Activated naive CD4-positive, alpha-beta T cell treated with anti-CD3 and anti-CD28 coated beads, Interleukin-2, amount 10 ng/mL, durations not matched to agents 7 days and 5 days (primary cell): ENCODE measurements at regions of chr19 and their contacts with region 1.

Region 1: DNA sequence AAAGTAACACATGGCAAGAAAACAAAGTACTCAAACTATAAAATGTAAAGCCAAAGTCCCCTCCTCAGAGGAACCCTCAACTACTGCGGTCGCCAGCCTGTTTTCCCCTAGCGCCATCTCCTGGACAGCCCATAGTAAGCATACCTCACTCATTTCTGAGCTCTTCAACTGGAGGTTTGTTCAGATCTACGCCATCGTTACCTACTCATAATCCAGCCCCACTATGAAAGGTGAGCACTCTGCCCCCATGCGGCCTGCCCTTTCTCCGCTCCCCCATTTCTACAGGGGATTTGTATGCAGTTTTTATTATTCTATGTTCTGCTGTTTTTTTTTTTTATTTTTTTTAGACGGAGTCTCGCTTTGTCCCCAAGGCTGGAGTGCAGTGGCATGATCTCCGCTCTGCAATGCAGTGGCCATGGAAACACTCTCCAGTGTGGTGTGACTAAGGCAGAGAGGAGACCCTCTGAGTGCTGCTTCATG is 26.2 kb downstream of the OPA3 start:
- DNase-seq: peak; percentile 82
- H3K4me3 Mint-ChIP-seq: no peak overlapping the region
- H3K27ac Mint-ChIP-seq: no peak overlapping the region
- H3K4me1 Mint-ChIP-seq: peaks cover 23% of the 10 kb centered on the region
- H3K27me3 Mint-ChIP-seq: no peaks in the 10 kb centered on the region

Region 2: DNA sequence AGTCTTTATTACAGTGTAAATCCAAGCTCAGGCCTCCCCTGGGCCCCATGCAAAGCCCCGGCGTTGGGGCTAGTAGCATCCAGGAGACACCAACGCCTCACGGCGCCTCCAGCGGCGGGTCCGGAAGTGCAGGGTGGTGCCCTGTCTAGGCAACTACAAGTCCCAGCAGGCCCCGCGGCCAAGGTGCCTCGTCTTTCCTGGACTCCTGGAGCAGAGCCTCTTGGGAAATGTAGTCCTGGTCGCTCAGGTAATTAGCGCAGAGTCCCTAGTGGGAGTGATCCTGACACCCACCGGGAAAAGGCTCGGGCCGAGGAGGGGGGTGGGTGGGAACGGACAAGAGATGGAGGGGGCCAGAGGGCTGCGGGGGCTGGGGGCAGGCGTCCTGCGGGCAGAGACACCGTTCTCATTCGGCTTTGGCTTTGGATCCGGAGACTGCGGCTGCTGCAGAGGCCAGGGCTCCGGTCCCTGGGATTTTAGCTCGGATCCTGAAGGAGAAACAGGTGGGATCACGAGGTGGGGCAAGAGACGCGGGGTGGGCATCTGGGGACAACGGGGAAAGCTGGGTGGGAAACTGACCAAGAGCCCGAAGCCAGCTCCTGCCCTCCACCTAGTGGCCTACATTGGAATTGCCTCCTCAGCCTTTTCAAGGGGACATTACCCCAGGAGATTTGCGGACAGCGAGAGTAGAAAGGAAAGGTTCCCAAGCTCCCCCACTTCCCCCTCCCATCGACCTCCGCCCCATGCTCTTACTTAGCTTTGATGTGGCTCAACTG is 72.9 kb before region 1 on chr19:
- CTCF ChIA-PET with region 1: interaction called, 15 read pairs
- DNase-seq: peak; percentile 99
- H3K4me3 Mint-ChIP-seq: peak overlapping the region; percentile 89
- H3K27ac Mint-ChIP-seq: peak overlapping the region; percentile 83
- H3K4me1 Mint-ChIP-seq: peaks cover 16% of the 10 kb centered on the region
- H3K27me3 Mint-ChIP-seq: peaks cover 31% of the 10 kb centered on the region

Region 3: DNA sequence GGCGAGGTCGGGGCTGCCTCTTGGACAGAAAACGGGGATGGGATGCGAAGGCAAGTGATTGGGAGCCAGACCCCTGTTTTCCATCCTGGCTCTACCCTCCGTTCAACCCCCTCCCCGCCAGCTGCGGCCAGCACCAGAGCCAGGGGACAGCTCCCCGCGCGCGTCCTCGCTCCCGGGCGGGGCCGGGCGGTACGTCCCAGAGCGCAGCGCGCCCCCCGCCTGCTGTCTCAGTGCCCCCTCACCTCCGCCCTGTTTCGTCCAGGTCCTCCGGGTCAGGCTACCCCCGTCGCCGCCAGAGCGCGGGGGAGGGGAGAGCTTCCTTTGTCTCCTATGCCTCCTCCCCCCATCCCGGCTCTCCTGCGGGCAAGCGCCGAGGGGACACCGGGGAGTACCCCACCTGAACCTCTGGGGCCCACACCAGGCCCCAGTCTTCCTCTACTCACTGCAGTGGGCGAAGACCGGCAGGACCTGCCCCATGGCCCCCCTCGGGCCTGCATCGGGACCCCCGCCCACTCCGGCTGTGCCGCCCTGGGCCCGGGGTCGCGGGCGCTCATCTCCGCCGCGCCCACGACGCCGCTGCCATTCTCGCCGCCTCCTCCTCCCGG is 62.0 kb before region 1 on chr19:
- CTCF ChIA-PET with region 1: interaction called, 12 read pairs
- DNase-seq: peak; percentile 71
- H3K4me3 Mint-ChIP-seq: peak overlapping the region; percentile 67
- H3K27ac Mint-ChIP-seq: no peak overlapping the region
- H3K4me1 Mint-ChIP-seq: peaks cover 40% of the 10 kb centered on the region
- H3K27me3 Mint-ChIP-seq: peaks cover 89% of the 10 kb centered on the region

Region 4: DNA sequence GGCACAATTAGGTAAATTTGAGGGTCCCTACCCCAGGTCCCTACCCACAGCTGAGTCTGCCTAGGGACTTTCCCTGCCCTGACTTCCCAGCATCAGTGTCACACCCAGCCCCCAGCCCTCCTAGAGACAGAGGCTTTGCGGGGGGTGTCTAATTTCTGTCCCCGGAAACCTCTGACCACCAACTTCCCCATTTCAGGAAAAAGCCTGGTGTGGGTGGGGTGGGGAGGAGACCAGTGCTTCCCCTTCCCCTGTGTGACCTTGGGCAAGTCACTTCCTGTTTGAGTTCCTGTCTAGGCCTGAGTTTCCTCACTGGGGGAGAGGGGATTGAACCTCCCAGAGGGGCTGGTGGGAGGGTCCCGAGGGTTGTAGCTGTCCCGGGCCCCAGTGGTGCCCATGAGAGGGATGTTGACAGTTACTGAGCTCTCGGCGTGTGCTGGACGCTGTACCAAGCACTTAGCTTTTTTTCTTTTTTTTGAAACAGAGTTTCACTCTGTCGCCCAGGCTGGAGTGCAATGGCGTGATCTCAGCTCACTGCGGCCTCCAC is 43.3 kb before region 1 on chr19:
- CTCF ChIA-PET with region 1: interaction called, 12 read pairs
- DNase-seq: peak; percentile 37
- H3K4me3 Mint-ChIP-seq: peak overlapping the region; percentile 35
- H3K27ac Mint-ChIP-seq: peak overlapping the region; percentile 83
- H3K4me1 Mint-ChIP-seq: peaks cover 69% of the 10 kb centered on the region
- H3K27me3 Mint-ChIP-seq: no peaks in the 10 kb centered on the region

Region 5: DNA sequence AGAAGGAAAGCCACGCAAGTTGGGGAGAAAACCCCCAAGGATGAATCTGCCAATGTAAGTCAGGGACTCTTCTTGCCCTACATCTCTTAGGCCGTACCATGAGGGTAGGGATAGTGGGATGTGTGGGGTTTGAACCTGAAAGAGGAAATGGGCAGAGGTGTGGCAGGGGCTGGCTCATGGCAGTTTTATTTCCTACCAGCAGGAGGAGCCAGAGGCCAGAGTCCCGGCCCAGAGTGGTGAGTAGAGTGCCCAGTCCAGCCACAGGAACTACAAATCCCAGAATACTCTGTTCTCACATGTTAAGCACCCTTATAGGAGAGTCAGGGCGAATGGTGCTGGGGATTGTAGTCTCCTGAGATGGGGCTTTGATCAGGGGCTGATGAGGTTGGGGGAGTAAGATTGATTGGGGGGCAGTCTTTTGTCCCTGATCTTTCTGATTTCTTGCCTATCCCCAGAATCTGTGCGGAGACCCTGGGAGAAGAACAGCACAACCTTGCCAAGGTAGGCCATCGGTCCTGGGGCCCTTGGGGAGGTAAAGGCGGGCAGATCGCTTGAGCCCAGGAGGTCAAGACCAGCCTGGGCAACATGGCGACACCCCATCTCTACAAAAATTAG is 34.7 kb before region 1 on chr19:
- CTCF ChIA-PET with region 1: interaction called, 14 read pairs
- DNase-seq: peak; percentile 81
- H3K4me3 Mint-ChIP-seq: no peak overlapping the region
- H3K27ac Mint-ChIP-seq: peak overlapping the region; percentile 64
- H3K4me1 Mint-ChIP-seq: peaks cover 22% of the 10 kb centered on the region
- H3K27me3 Mint-ChIP-seq: peaks cover 7% of the 10 kb centered on the region

Region 6: DNA sequence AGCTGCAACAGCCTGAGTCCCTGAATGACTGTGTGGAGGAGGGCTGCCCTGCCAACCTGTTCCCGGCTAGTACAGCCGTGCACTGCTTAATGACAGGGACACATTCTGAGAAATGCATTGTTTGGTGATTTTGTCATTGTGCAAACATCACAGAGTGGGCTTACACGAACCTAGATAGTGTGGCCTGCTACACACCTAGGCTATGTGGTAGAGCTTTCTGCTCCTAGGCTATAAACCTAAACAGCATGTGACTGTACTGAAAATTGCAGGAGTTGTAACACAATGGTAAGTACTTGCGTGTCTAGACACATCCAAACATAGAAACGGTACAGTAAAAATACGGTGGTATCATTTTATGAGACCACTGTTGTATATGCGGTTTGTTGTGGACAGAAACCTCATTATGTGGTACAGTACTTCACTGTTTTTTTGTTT is 16.2 kb before region 1 on chr19:
- CTCF ChIA-PET with region 1: interaction called, 10 read pairs
- DNase-seq: no peak
- H3K4me3 Mint-ChIP-seq: no peak overlapping the region
- H3K27ac Mint-ChIP-seq: no peak overlapping the region
- H3K4me1 Mint-ChIP-seq: peaks cover 6% of the 10 kb centered on the region
- H3K27me3 Mint-ChIP-seq: no peaks in the 10 kb centered on the region

Region 7: DNA sequence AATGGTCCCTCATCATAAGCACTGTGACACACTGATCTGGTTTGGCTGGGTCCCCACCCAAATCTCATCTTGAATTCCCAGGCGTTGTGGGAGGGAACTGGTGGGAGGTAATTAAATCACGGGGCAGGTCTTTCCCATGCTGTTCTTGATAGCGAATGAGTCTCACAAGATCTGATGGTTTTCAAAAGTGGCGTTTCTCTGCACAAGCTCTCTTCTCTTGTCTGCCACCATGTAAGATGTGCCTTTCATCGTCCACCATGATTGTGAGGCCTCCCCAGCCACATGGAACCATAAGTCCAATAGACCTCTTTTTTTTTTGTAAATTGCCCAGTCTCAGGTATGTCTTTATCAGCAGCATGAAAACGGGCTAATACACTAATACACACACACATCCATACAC is 50.5 kb after region 1 on chr19:
- CTCF ChIA-PET with region 1: no interaction called
- DNase-seq: no peak
- H3K4me3 Mint-ChIP-seq: no peak overlapping the region
- H3K27ac Mint-ChIP-seq: no peak overlapping the region
- H3K4me1 Mint-ChIP-seq: peaks cover 13% of the 10 kb centered on the region
- H3K27me3 Mint-ChIP-seq: peaks cover 5% of the 10 kb centered on the region

Region 8: GRCh38 chr19:45621389-45621788 is 63.0 kb after region 1 on chr19:
- CTCF ChIA-PET with region 1: no interaction called
- DNase-seq: no peak
- H3K4me3 Mint-ChIP-seq: no peak overlapping the region
- H3K27ac Mint-ChIP-seq: no peak overlapping the region
- H3K4me1 Mint-ChIP-seq: no peaks in the 10 kb centered on the region
- H3K27me3 Mint-ChIP-seq: no peaks in the 10 kb centered on the region